ENCODE measurements at regions of chr3 and their contacts with region 1.

Region 1: DNA sequence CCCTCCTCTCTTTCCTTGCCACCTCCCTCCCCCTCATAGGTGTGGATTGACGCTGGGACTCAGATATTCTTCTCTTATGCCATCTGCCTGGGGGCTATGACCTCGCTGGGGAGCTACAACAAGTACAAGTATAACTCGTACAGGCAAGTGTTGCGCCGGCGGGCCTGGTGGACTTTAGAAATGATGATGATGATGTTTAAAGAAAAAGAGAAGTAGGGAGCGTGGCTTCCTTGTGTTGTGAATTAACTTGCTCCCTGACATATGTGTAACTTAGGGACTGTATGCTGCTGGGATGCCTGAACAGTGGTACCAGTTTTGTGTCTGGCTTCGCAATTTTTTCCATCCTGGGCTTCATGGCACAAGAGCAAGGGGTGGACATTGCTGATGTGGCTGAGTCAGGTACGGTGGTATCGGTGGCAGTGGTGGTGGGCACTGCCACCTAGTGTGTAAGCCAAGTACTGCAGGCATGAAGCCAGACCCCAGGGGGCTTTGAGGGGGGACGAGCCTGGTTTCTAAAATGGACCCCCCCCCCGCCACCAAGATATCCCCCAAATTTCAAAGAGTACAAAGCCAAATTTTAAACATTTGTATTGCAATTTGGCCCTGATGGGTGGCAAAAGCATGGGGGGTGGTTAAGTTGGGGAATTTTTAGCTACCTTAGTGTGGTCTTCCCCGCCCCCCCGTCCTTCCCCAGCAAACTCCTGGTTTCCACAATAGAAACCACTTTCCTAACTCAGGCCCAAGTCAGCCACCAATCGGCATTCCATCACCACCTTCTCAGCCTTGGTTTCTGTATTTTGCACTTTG is 65.6 kb downstream of the SLC6A6 start:
- DNase-seq: no peak
- ATAC-seq: no peak; the same call in 1 of the 2 replicates
- H3K4me3 ChIP-seq: no peak overlapping the region
- H3K27ac ChIP-seq: no peak overlapping the region
- H3K4me1 ChIP-seq: peaks cover 9% of the 10 kb centered on the region
- H3K27me3 ChIP-seq: no peaks in the 10 kb centered on the region
- CTCF ChIP-seq: peak; percentile 89

Region 2: DNA sequence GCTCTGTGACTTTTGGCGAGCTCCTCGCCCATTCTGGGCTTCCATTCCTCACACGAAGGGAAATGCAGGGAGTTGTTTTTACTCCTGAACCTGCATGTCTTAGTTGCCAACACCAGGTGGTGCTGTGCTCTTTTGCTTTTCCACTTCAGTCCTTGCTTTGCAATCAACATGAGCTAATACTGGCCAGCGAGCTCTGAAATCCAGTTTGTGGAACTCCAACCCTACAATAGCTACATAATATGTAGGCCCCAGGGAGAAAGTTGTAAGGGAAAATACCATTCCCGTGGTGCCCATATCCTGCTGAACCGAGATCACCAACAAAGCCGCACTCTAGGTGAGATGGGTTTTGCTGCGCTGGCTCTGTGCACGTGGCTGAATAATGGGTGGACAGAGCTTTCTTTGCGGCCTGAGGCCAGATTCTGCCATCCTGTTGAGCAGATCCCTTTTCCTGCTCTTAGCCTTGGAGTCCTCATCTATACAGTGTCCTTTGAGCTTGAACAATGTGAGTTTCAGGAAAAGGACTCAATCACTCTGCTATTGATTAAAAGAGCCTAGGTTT is 264.4 kb before region 1 on chr3:
- CTCF ChIA-PET with region 1: interaction called, 16 read pairs
- POLR2A ChIA-PET with region 1: interaction called, 15 read pairs
- in situ Hi-C with region 1: no loop called
- intact Hi-C with region 1: loop called (anchors 5 kb)
- DNase-seq: peak; percentile 61
- ATAC-seq: peak; percentile 89
- H3K4me3 ChIP-seq: no peak overlapping the region
- H3K27ac ChIP-seq: peak overlapping the region; percentile 69; the same call in 1 of the 2 replicates
- H3K4me1 ChIP-seq: peaks cover 22% of the 10 kb centered on the region
- H3K27me3 ChIP-seq: no peaks in the 10 kb centered on the region
- CTCF ChIP-seq: peak; percentile 83

Region 3: DNA sequence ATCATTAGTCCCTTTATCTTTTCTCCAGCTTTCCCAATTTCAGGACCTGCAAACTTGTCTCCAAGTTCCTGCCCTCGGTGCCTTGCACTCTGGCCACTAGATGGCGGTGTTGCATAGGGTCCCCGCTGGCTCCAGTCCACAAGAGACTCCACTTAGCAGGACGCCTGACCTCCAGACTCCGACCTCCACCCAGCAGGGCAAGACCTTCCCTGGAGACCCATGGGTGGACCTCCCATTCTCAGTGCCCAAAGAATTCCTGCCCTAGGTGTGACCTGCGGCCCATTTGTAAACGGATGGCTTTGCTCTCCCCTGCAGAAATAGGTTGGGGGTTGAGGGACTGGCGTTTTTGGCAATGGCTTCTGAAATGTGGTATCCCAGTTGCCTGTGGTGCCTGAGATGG is 206.8 kb before region 1 on chr3:
- CTCF ChIA-PET with region 1: interaction called, 12 read pairs
- POLR2A ChIA-PET with region 1: no interaction called
- in situ Hi-C with region 1: no loop called
- intact Hi-C with region 1: loop called (anchors 5 kb)
- DNase-seq: peak; percentile 61
- ATAC-seq: peak; percentile 67
- H3K4me3 ChIP-seq: no peak overlapping the region
- H3K27ac ChIP-seq: peak overlapping the region; percentile 85
- H3K4me1 ChIP-seq: peaks cover 48% of the 10 kb centered on the region
- H3K27me3 ChIP-seq: no peaks in the 10 kb centered on the region
- CTCF ChIP-seq: peak; percentile 92

Region 4: DNA sequence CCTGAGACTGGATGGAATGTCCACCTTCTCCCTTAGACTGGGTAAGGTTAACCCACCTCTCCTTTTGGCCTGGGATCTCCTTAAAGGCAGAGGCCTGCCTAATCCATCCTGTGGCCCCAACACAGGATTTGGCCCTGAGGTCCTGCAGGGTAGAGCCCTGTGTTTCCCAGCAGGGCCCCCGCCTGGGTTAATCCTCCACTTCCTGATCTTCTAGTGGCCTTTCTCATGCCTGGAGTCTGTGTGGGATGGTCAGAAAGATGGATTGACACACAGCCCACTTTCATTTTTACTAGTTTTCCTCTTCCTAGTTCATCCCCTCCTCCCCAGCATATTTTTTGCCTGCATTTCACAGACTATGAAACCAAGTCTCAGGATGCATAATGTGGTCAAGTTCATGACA is 114.5 kb before region 1 on chr3:
- CTCF ChIA-PET with region 1: no interaction called
- POLR2A ChIA-PET with region 1: interaction called, 21 read pairs
- in situ Hi-C with region 1: no loop called
- intact Hi-C with region 1: no loop called
- DNase-seq: no peak
- ATAC-seq: no peak
- H3K4me3 ChIP-seq: no peak overlapping the region
- H3K27ac ChIP-seq: 0 out of 2 replicates have a peak overlapping the region, but pooled peaks have one; percentile 17
- H3K4me1 ChIP-seq: no peaks in the 10 kb centered on the region
- H3K27me3 ChIP-seq: no peaks in the 10 kb centered on the region
- CTCF ChIP-seq: no peak

Region 5: GRCh38 chr3:14388201-14388600 is 79.8 kb before region 1 on chr3:
- CTCF ChIA-PET with region 1: interaction called, 12 read pairs
- POLR2A ChIA-PET with region 1: no interaction called
- in situ Hi-C with region 1: no loop called
- intact Hi-C with region 1: no loop called
- DNase-seq: no peak
- ATAC-seq: no peak
- H3K4me3 ChIP-seq: no peak overlapping the region
- H3K27ac ChIP-seq: no peak overlapping the region
- H3K4me1 ChIP-seq: no peaks in the 10 kb centered on the region; the same call in 1 of the 2 replicates
- H3K27me3 ChIP-seq: no peaks in the 10 kb centered on the region
- CTCF ChIP-seq: no peak

Measured in Panc1 (cell line).